ENCODE measurements at regions of chr12 and their contacts with region 1.

Region 1: DNA sequence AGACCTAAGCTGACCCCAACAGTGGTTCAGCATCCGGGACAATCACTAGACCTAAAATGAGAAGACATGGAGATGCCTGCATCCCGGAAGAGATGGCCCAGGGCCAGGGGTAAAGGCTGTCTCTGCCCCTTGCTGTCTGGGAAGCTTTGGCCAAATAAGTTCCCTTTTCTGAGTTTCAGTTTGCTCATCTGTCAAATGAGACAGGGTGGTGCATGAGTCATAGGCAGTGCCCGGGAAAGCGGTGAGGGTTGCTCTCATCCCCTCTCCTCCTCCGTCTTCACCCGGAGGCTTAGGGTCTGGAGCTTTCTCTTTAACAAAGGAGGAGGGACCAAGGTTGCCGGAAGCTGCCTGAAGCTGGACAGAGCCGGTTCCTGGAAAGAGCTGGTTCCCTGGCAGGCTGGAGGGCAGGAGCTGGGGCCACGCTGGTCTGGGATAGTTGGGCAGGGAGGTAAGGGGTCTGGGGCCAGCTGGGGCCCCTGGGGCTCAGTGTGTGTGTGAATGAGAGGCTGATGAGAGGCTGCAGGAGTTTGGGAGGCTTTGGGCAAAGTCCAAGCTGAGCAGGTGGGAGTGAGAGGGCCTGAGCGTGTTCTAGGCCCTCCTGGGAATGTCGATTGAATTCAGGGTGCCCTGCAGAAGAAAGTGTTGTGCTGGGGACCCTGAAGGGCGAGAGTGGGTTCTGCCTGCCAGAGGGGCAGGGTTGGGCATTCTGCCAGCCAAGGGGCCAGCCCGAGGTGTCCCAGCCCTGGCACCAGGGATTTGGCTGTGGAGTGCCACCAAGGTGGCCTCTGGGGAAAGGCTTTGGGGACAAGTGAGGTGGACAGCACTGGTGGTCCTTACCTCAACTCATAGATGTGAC is at the start of gene SDSL:
- DNase-seq: peak; percentile 33
- ATAC-seq: peak; percentile 88
- H3K4me3 ChIP-seq: peak within 1 kb of the TSS; percentile 46 to 65
- H3K27ac ChIP-seq: peak within 1 kb of the TSS; percentile 78
- H3K4me1 ChIP-seq: no peaks in the 10 kb centered on the region; the same call in 1 of the 2 replicates
- H3K27me3 ChIP-seq: no peaks in the 10 kb centered on the region
- CTCF ChIP-seq: no peak
- total RNA-seq, gene SDSL: 5.8 TPM

Region 2: DNA sequence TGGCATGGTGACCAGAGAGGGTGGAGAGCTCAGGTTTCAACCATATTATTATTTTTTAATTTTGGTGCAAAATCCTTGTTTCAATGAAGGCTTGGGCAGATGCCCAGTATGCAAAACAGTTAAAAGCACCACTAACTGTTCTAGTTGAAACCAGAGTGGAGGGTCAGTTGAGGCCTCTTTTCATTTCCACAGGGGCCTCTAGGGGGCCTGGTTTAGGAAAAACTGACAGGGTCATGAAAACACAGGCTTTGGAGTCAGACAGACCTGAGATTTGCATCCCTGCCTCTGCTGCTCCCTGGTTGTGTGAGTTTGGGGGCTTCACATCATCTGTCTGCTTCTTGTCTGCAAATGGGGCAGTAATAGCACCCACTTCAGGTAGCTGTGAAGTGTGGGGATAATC is 634.1 kb before region 1 on chr12:
- CTCF ChIA-PET with region 1: no interaction called
- POLR2A ChIA-PET with region 1: interaction called, 14 read pairs
- in situ Hi-C with region 1: no loop called
- intact Hi-C with region 1: no loop called
- DNase-seq: no peak
- ATAC-seq: no peak
- H3K4me3 ChIP-seq: no peak overlapping the region
- H3K27ac ChIP-seq: no peak overlapping the region
- H3K4me1 ChIP-seq: no peaks in the 10 kb centered on the region
- H3K27me3 ChIP-seq: peaks cover 30% of the 10 kb centered on the region
- CTCF ChIP-seq: no peak; the same call in none of the 2 replicates

Region 3: GRCh38 chr12:113305281-113305852 is 116.9 kb before region 1 on chr12:
- CTCF ChIA-PET with region 1: interaction called, 7 read pairs
- POLR2A ChIA-PET with region 1: interaction called, 18 read pairs
- in situ Hi-C with region 1: no loop called
- intact Hi-C with region 1: no loop called
- DNase-seq: no peak
- ATAC-seq: no peak
- H3K4me3 ChIP-seq: no peak overlapping the region
- H3K27ac ChIP-seq: no peak overlapping the region
- H3K4me1 ChIP-seq: no peaks in the 10 kb centered on the region
- H3K27me3 ChIP-seq: no peaks in the 10 kb centered on the region
- CTCF ChIP-seq: no peak

Region 4: GRCh38 chr12:113310489-113310888 is 111.8 kb before region 1 on chr12:
- CTCF ChIA-PET with region 1: interaction called, 7 read pairs
- POLR2A ChIA-PET with region 1: interaction called, 18 read pairs
- in situ Hi-C with region 1: no loop called
- intact Hi-C with region 1: loop called (anchors 1 kb)
- DNase-seq: no peak
- ATAC-seq: no peak
- H3K4me3 ChIP-seq: no peak overlapping the region
- H3K27ac ChIP-seq: no peak overlapping the region
- H3K4me1 ChIP-seq: no peaks in the 10 kb centered on the region
- H3K27me3 ChIP-seq: no peaks in the 10 kb centered on the region
- CTCF ChIP-seq: no peak

Region 5: GRCh38 chr12:113497693-113498092 is 75.4 kb after region 1 on chr12:
- CTCF ChIA-PET with region 1: no interaction called
- POLR2A ChIA-PET with region 1: no interaction called
- in situ Hi-C with region 1: no loop called
- intact Hi-C with region 1: no loop called
- DNase-seq: no peak
- ATAC-seq: no peak
- H3K4me3 ChIP-seq: no peak overlapping the region
- H3K27ac ChIP-seq: no peak overlapping the region
- H3K4me1 ChIP-seq: no peaks in the 10 kb centered on the region
- H3K27me3 ChIP-seq: peaks cover 14% of the 10 kb centered on the region
- CTCF ChIP-seq: no peak

Region 6: DNA sequence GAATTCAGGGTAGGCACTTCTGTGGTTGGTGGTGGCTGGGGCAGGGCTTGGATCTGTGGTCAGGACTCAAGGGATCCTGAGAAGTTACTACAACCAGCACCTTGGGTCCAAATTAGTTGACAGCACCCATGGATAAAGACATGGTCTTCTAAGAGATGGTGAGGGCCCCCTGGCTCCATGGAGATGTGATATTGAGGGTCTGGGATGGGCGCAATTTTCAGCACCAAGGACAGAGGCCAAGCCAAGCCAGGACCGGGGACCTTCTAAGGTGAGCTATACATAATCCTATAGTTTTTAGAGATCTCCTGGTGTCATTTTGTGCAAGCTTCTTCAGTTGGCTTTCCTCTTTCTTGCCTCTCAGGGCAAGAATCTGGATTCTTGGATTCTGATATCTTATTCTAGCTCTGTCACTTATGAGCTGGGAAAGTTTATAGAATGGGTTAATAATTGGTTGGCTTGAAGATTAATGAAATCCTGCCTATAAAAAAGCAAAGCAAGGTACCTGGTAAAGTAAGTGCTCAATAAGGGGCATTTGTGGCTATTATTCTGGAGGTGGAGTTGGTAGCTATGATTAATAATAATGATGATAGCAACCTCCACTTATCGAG is 179.5 kb after region 1 on chr12:
- CTCF ChIA-PET with region 1: no interaction called
- POLR2A ChIA-PET with region 1: no interaction called
- in situ Hi-C with region 1: no loop called
- intact Hi-C with region 1: no loop called
- DNase-seq: no peak
- ATAC-seq: no peak
- H3K4me3 ChIP-seq: no peak overlapping the region
- H3K27ac ChIP-seq: no peak overlapping the region
- H3K4me1 ChIP-seq: no peaks in the 10 kb centered on the region
- H3K27me3 ChIP-seq: peaks cover 11% of the 10 kb centered on the region
- CTCF ChIP-seq: no peak

Measured in Panc1 (cell line).